PC-9 (cell line): ENCODE measurements at regions of chr12 and their contacts with region 1.

Region 1: GRCh38 chr12:80412369-80412953 is 31.6 kb upstream of the PTPRQ start:
- DNase-seq: no peak
- H3K4me3 ChIP-seq: no peak overlapping the region
- H3K27ac ChIP-seq: no peak overlapping the region
- H3K4me1 ChIP-seq: no peaks in the 10 kb centered on the region
- H3K27me3 ChIP-seq: no peaks in the 10 kb centered on the region
- CTCF ChIP-seq: peak; percentile 88

Region 2: GRCh38 chr12:80763874-80764273 is 351.4 kb after region 1 on chr12:
- CTCF ChIA-PET with region 1: no interaction called
- POLR2A ChIA-PET with region 1: no interaction called
- intact Hi-C with region 1: loop called (anchors 2 kb)
- DNase-seq: peak; percentile 7 to 40
- H3K4me3 ChIP-seq: no peak overlapping the region
- H3K27ac ChIP-seq: no peak overlapping the region
- H3K4me1 ChIP-seq: no peaks in the 10 kb centered on the region
- H3K27me3 ChIP-seq: no peaks in the 10 kb centered on the region
- CTCF ChIP-seq: peak; percentile 85

Region 3: DNA sequence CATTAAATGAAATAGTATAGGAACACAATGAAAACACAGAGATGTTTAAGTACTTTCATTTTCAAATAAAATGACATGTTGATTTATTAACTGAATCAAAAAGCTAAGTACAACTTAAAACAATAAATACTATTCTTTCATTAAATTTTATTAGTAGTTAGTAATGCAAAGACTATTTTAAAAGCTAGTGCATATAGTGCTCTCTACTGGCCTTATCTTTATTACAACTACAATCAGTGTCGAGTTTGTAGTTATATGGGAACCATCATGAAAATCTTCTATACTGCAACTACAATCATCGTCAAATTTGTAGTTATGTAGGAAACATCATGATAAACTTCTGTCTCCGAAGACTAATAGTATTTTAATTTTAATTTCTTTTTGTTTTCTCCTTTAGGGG is 534.1 kb after region 1 on chr12:
- CTCF ChIA-PET with region 1: no interaction called
- POLR2A ChIA-PET with region 1: no interaction called
- intact Hi-C with region 1: loop called (anchors 5 kb)
- DNase-seq: no peak
- H3K4me3 ChIP-seq: no peak overlapping the region
- H3K27ac ChIP-seq: no peak overlapping the region
- H3K4me1 ChIP-seq: no peaks in the 10 kb centered on the region
- H3K27me3 ChIP-seq: no peaks in the 10 kb centered on the region
- CTCF ChIP-seq: peak; percentile 46

Region 4: DNA sequence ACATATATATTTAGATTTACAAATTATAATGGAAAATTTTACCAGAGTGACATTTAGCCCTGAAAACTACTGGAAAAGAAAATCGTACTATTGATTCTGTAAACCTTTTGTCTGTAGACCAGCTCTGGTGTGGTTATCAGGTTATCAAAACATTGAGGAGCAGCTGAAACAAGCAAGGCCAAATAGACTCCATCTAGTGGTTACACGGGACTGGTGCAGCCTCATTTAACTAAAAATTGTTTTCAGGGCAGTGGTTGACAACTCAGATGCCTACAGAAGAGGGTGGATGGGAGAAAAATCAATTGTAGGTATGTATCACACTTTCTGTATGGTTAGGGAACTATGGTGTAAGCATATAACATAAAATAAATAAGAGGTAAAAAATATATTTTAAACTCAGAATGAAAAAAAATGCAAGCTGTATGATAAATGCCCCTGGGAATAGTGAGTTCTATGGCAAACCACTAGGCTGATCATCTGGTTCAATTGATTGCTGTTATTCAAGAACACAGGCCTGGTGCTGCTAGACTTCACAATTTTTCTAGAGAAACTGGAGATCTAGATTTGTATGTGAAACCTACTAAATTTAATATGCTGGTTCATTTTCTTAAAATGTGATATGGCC is 716.6 kb after region 1 on chr12:
- CTCF ChIA-PET with region 1: no interaction called
- POLR2A ChIA-PET with region 1: no interaction called
- intact Hi-C with region 1: loop called (anchors 10 kb)
- DNase-seq: peak; percentile 4 to 42
- H3K4me3 ChIP-seq: no peak overlapping the region
- H3K27ac ChIP-seq: no peak overlapping the region
- H3K4me1 ChIP-seq: no peaks in the 10 kb centered on the region
- H3K27me3 ChIP-seq: no peaks in the 10 kb centered on the region
- CTCF ChIP-seq: peak; percentile 85

Region 5: DNA sequence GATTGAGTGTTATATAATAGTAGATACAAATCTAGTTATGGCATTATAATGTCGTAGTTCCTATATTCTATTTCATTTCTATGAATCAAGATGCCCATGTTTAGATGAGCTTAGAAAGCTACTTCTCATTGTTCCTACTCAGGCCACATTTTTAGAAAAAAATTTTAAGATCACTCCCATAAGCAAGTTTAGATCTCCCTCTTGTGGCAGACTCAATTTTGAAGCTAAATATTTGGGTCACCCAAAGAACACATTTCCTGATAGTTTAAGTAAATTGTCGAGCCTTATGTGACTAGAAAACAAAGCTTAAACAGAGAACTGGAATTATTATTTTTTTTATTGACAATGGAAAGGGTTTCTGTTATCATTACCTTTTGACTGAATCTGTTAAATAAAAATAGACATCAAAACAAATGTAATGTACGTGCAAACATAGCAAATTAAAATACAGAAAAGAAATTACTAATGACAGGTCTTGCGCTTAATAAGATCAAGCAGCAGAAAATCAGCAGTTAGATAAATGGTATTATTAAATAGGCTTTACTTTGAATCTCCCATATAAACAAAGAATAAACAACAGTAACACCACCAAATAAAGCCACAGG is 845.6 kb after region 1 on chr12:
- CTCF ChIA-PET with region 1: no interaction called
- POLR2A ChIA-PET with region 1: no interaction called
- intact Hi-C with region 1: loop called (anchors 5 kb)
- DNase-seq: peak in 1 of 2 experiments; percentile 40
- H3K4me3 ChIP-seq: no peak overlapping the region
- H3K27ac ChIP-seq: no peak overlapping the region
- H3K4me1 ChIP-seq: no peaks in the 10 kb centered on the region
- H3K27me3 ChIP-seq: no peaks in the 10 kb centered on the region
- CTCF ChIP-seq: peak; percentile 76